Naive thymus-derived CD4-positive, alpha-beta T cell (primary cell): ENCODE measurements at regions of chr7 and their contacts with region 1.

Region 1: DNA sequence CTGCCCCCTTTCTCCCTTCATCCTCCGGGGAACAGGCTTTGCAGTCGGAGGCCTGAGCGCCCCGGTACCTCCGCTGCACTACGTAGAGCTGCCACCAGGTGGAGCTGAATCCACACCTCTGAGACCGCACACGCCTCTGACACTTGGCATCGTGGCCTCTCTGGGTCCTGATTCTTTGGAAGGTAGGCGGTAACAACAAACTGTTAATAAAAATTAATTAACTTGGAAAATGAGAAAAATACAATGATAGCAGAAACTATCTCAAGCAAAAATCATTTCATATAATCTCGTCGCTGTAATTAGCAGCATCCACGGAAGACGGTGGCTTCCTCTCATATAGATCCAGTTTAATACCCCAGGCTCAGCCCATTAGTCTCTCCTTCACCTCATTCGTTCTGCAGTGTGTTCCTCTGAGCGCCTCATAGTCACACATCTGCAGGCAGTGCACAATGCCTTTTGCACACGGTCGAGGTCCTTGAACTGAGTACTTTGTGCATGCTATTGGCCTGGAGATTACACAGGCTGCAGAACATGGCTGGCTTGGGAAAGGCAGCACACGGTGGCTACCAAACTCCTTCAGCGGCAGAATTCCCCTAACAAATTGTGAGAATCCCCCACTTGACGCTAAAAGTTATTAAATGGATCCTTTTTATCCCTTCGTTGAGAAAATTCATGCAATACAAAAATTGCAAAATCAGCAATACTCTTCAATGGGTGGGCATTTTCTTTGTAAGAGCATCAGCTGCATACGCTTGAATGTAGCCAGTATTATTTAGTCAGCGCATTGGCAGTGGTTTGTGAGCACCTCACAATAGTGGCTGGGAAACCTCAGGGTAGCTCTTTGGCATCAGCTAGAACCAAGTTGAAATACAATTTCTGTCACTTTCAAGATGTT is 18.7 kb downstream of the OR9A2 start:
- DNase-seq: peak; percentile 57 to 85 (median 75)
- ATAC-seq: peak; percentile 98
- H3K4me3 ChIP-seq: no peak overlapping the region
- H3K4me3 Mint-ChIP-seq: no peak overlapping the region
- H3K27ac ChIP-seq: no peak overlapping the region
- H3K27ac Mint-ChIP-seq: peak overlapping the region in 1 of 9 donors; percentile 56
- H3K4me1 ChIP-seq: no peaks in the 10 kb centered on the region
- H3K4me1 Mint-ChIP-seq: peaks cover 3 to 8% (median 5%) of the 10 kb centered on the region in 7 donors
- H3K27me3 ChIP-seq: no peaks in the 10 kb centered on the region
- H3K27me3 Mint-ChIP-seq: peaks cover 0 to 24% (median 4%) of the 10 kb centered on the region in 5 donors

Region 2: GRCh38 chr7:141975806-141976523 is 1032.3 kb before region 1 on chr7:
- CTCF ChIA-PET with region 1: no interaction called
- POLR2A ChIA-PET with region 1: no interaction called
- intact Hi-C with region 1: loop called in 1 of 2 experiments (anchors 5 kb)
- DNase-seq: peak; percentile 31 to 72 (median 59)
- ATAC-seq: peak; percentile 84
- H3K4me3 ChIP-seq: peak overlapping the region; percentile 73
- H3K4me3 Mint-ChIP-seq: peak overlapping the region; percentile 57 to 88 (median 82)
- H3K27ac ChIP-seq: no peak overlapping the region
- H3K27ac Mint-ChIP-seq: peak overlapping the region in 8 of 9 donors; percentile 38 to 91 (median 76)
- H3K4me1 ChIP-seq: peaks cover 0 to 12% of the 10 kb centered on the region in 2 donors
- H3K4me1 Mint-ChIP-seq: peaks cover 6 to 29% (median 13%) of the 10 kb centered on the region in 7 donors
- H3K27me3 ChIP-seq: no peaks in the 10 kb centered on the region
- H3K27me3 Mint-ChIP-seq: no peaks in the 10 kb centered on the region

Region 3: GRCh38 chr7:142345811-142346210 is 662.4 kb before region 1 on chr7:
- CTCF ChIA-PET with region 1: no interaction called
- POLR2A ChIA-PET with region 1: no interaction called
- intact Hi-C with region 1: loop called in 1 of 2 experiments (anchors 2 kb)
- DNase-seq: peak in 5 of 9 donors; percentile 43 to 61 (median 50)
- ATAC-seq: peak; percentile 67
- H3K4me3 ChIP-seq: peak overlapping the region; percentile 21
- H3K4me3 Mint-ChIP-seq: peak overlapping the region in 7 of 10 donors; percentile 11 to 73 (median 69)
- H3K27ac ChIP-seq: peak overlapping the region; percentile 2
- H3K27ac Mint-ChIP-seq: peak overlapping the region in 7 of 9 donors; percentile 1 to 79 (median 40)
- H3K4me1 ChIP-seq: peaks cover 20 to 26% of the 10 kb centered on the region in 2 donors
- H3K4me1 Mint-ChIP-seq: peaks cover 3 to 42% (median 9%) of the 10 kb centered on the region in 7 donors
- H3K27me3 ChIP-seq: no peaks in the 10 kb centered on the region
- H3K27me3 Mint-ChIP-seq: peaks cover 0 to 26% (median 0%) of the 10 kb centered on the region in 5 donors

Region 4: GRCh38 chr7:142516038-142516501 is 492.2 kb before region 1 on chr7:
- CTCF ChIA-PET with region 1: no interaction called
- POLR2A ChIA-PET with region 1: no interaction called
- intact Hi-C with region 1: loop called in 1 of 2 experiments (anchors 1 kb)
- DNase-seq: peak in 5 of 9 donors; percentile 42 to 55 (median 47)
- ATAC-seq: peak; percentile 85
- H3K4me3 ChIP-seq: no peak overlapping the region
- H3K4me3 Mint-ChIP-seq: peak overlapping the region in 7 of 10 donors; percentile 4 to 81 (median 46)
- H3K27ac ChIP-seq: no peak overlapping the region
- H3K27ac Mint-ChIP-seq: peak overlapping the region in 8 of 9 donors; percentile 32 to 92 (median 74)
- H3K4me1 ChIP-seq: peaks cover 0 to 35% of the 10 kb centered on the region in 2 donors
- H3K4me1 Mint-ChIP-seq: peaks cover 19 to 67% (median 56%) of the 10 kb centered on the region in 7 donors
- H3K27me3 ChIP-seq: no peaks in the 10 kb centered on the region
- H3K27me3 Mint-ChIP-seq: peaks cover 0 to 10% (median 0%) of the 10 kb centered on the region in 5 donors

Region 5: GRCh38 chr7:142632291-142633134 is 375.7 kb before region 1 on chr7:
- CTCF ChIA-PET with region 1: interaction called, 7 read pairs
- POLR2A ChIA-PET with region 1: no interaction called
- intact Hi-C with region 1: loop called (anchors 1 kb)
- DNase-seq: peak; percentile 26 to 76 (median 63)
- ATAC-seq: peak; percentile 80
- H3K4me3 ChIP-seq: no peak overlapping the region
- H3K4me3 Mint-ChIP-seq: peak overlapping the region in 5 of 10 donors; percentile 6 to 63 (median 38)
- H3K27ac ChIP-seq: no peak overlapping the region
- H3K27ac Mint-ChIP-seq: peak overlapping the region in 7 of 9 donors; percentile 13 to 84 (median 46)
- H3K4me1 ChIP-seq: no peaks in the 10 kb centered on the region
- H3K4me1 Mint-ChIP-seq: peaks cover 4 to 17% (median 11%) of the 10 kb centered on the region in 7 donors
- H3K27me3 ChIP-seq: no peaks in the 10 kb centered on the region
- H3K27me3 Mint-ChIP-seq: peaks cover 0 to 15% (median 0%) of the 10 kb centered on the region in 5 donors

Region 6: GRCh38 chr7:142880876-142881505 is 127.3 kb before region 1 on chr7:
- CTCF ChIA-PET with region 1: interaction called, 7 read pairs
- POLR2A ChIA-PET with region 1: no interaction called
- intact Hi-C with region 1: loop called (anchors 1 to 5 kb)
- DNase-seq: peak; percentile 29 to 60 (median 53)
- ATAC-seq: peak; percentile 76
- H3K4me3 ChIP-seq: no peak overlapping the region
- H3K4me3 Mint-ChIP-seq: no peak overlapping the region
- H3K27ac ChIP-seq: no peak overlapping the region
- H3K27ac Mint-ChIP-seq: no peak overlapping the region
- H3K4me1 ChIP-seq: no peaks in the 10 kb centered on the region
- H3K4me1 Mint-ChIP-seq: no peaks in the 10 kb centered on the region
- H3K27me3 ChIP-seq: no peaks in the 10 kb centered on the region
- H3K27me3 Mint-ChIP-seq: peaks cover 0 to 20% (median 2%) of the 10 kb centered on the region in 5 donors

Region 7: GRCh38 chr7:143408686-143409561 is 400.7 kb after region 1 on chr7 and contains the start of gene EPHA1:
- CTCF ChIA-PET with region 1: no interaction called
- POLR2A ChIA-PET with region 1: no interaction called
- intact Hi-C with region 1: loop called (anchors 5 to 10 kb)
- DNase-seq: peak in 7 of 9 donors; percentile 52 to 67 (median 62)
- ATAC-seq: peak; percentile 83
- H3K4me3 ChIP-seq: peak within 1 kb of the TSS; percentile 59
- H3K4me3 Mint-ChIP-seq: peak within 1 kb of the TSS; percentile 77 to 98 (median 94)
- H3K27ac ChIP-seq: peak within 1 kb of the TSS; percentile 69
- H3K27ac Mint-ChIP-seq: peak within 1 kb of the TSS; percentile 61 to 97 (median 94)
- H3K4me1 ChIP-seq: peaks cover 31 to 44% of the 10 kb centered on the region in 2 donors
- H3K4me1 Mint-ChIP-seq: peaks cover 23 to 88% (median 87%) of the 10 kb centered on the region in 7 donors
- H3K27me3 ChIP-seq: no peaks in the 10 kb centered on the region
- H3K27me3 Mint-ChIP-seq: peaks cover 0 to 14% (median 0%) of the 10 kb centered on the region in 5 donors
- total RNA-seq, gene EPHA1: 4.1 to 63.1 (median 33.6) TPM